Uterus (tissue), 4 donors: ENCODE measurements at regions of chr21 and their contacts with region 1.

Region 1: DNA sequence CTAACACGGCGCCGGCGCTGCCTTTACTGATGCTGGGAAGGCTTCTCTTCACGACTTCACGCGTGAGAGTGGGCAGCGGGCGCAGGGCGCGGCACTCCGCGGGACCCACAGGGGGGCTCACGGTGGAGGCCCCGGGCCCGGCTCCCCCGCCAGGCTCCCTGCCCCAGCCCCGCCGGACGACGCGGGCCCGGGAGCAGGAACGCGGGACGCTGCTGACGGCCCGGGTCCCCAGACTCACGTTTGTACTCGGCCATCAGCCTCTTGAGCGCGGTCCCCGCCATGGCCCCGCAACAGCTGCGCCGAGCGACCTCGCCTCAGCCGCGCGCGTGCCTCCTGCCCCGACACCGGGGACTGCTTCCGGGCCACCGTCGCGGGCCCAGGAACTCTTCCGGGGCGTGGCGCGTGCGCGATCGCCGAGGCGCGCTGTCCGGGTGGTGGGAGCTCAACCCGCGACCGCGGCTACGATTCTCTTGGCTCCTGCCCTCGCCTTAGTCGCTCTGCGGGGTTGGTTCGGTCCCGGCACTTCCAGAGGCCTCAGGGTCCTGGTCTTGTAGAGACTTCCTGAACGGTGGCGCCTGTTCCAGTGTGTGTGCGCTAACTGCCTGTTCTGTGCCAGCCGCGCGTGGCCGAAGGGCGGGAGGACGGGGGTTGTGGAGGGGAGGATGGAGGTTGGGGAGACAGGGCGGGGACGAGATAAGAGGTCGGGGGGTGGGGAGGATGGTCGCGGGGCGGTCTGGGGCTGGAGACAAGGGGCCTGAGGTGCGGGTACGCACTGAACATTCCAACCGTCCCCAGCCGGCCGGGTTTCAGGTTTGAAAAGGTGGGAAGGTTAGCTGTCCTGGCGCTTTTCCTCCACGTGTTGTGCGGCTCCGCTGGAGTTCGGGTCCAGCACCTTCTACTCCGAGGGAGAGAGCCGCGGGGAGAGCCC is at the start of gene UBE2G2:
- DNase-seq: peak; percentile 64 to 85
- H3K4me3 ChIP-seq: peak within 1 kb of the TSS; percentile 71 to 81
- H3K27ac ChIP-seq: peak within 1 kb of the TSS; percentile 68 to 78
- H3K4me1 ChIP-seq: peaks cover 8 to 13% of the 10 kb centered on the region in 2 donors
- H3K27me3 ChIP-seq: no peaks in the 10 kb centered on the region
- CTCF ChIP-seq: peak in 1 of 4 experiments; percentile 43
- POLR2A ChIP-seq: peak; percentile 11 to 72
- total RNA-seq, gene UBE2G2: 38.4 to 75.1 (median 67.4) TPM

Region 2: GRCh38 chr21:44347911-44348753 is 453.6 kb before region 1 on chr21:
- intact Hi-C with region 1: loop called (anchors 10 kb)
- DNase-seq: no peak
- H3K4me3 ChIP-seq: no peak overlapping the region
- H3K27ac ChIP-seq: no peak overlapping the region
- H3K4me1 ChIP-seq: no peaks in the 10 kb centered on the region
- H3K27me3 ChIP-seq: peaks cover 3 to 5% of the 10 kb centered on the region in 2 donors
- CTCF ChIP-seq: no peak
- POLR2A ChIP-seq: no peak

Region 3: GRCh38 chr21:44873356-44874239 is 71.9 kb after region 1 on chr21 and contains the start of gene PTTG1IP:
- intact Hi-C with region 1: loop called (anchors 5 kb)
- DNase-seq: peak; percentile 98 to 100
- H3K4me3 ChIP-seq: peak within 1 kb of the TSS; percentile 66 to 90
- H3K27ac ChIP-seq: peak within 1 kb of the TSS; percentile 87 to 89
- H3K4me1 ChIP-seq: peaks cover 15 to 31% of the 10 kb centered on the region in 2 donors
- H3K27me3 ChIP-seq: no peaks in the 10 kb centered on the region
- CTCF ChIP-seq: peak in 1 of 4 experiments; percentile 16
- POLR2A ChIP-seq: peak; percentile 70 to 81
- total RNA-seq, gene PTTG1IP: 108 to 202 (median 146) TPM

Region 4: DNA sequence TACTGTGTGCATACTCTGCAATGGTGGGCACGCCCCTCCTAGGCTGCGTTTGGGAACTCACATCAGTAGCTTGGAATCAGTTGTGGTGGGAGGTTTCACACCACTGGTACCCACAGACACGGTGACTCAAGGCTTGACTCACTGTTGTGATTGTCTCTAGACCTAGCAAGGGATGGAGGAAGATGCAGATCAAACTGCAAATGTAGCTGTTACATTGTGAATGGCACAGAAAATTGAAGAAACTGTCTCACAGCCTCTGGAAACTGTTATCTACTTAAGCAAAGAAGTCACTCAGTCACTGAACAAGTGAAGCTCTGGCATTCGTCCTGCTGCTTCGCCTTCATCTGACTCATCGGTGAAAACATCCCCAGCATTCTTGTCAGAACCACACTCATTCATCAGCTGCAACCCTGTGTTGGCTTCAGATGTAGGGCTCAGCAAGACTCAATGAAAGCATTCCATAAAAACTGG is 426.5 kb after region 1 on chr21:
- intact Hi-C with region 1: no loop called
- DNase-seq: peak in 1 of 2 donors; percentile 54
- H3K4me3 ChIP-seq: no peak overlapping the region
- H3K27ac ChIP-seq: no peak overlapping the region
- H3K4me1 ChIP-seq: no peaks in the 10 kb centered on the region
- H3K27me3 ChIP-seq: no peaks in the 10 kb centered on the region
- CTCF ChIP-seq: no peak
- POLR2A ChIP-seq: no peak